ENCODE measurements at regions of chr1 and their contacts with region 1.

Region 1: GRCh38 chr1:94417978-94418663 is at the start of gene ABCD3:
- DNase-seq: peak; percentile 96 to 99 (median 98)
- ATAC-seq: peak; percentile 89
- H3K4me3 Mint-ChIP-seq: peak within 1 kb of the TSS in 1 of 10 donors; percentile 89
- H3K27ac Mint-ChIP-seq: peak within 1 kb of the TSS in 7 of 10 donors; percentile 36 to 92 (median 88)
- H3K4me1 Mint-ChIP-seq: peaks cover 12 to 41% (median 37%) of the 10 kb centered on the region in 4 donors
- H3K27me3 Mint-ChIP-seq: peaks cover 0 to 5% (median 3%) of the 10 kb centered on the region in 5 donors
- polyA plus RNA-seq, gene ABCD3: 27.3 to 31.6 (median 27.7) TPM

Region 2: DNA sequence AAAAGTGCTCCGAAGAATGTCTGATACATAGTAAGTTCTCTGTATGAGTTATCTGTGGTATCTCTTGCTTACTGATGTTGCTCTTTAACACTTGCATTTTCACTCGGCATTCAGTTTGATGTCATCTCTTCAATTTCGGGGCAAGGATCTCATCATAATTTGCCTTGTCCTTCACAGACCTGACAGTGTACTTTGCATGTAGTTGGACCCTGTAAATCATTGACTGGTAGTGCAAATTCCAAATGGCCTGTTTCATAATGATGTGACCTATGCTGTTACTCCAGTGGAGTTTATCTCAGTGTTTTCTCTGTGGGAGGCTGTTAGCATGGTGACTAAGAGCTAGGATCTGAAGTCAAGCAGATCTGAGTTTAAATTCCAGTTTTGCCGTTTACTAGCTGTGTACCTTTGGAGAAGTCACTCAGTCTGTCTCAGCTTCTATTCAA is 34.1 kb before region 1 on chr1:
- POLR2A ChIA-PET with region 1: interaction called, 12 read pairs
- DNase-seq: no peak
- ATAC-seq: no peak
- H3K4me3 Mint-ChIP-seq: peak overlapping the region in 3 of 10 donors; percentile 15 to 75 (median 61)
- H3K27ac Mint-ChIP-seq: peak overlapping the region in 6 of 10 donors; percentile 59 to 90 (median 68)
- H3K4me1 Mint-ChIP-seq: peaks cover 12 to 28% (median 23%) of the 10 kb centered on the region in 4 donors
- H3K27me3 Mint-ChIP-seq: peaks cover 0 to 6% (median 0%) of the 10 kb centered on the region in 5 donors